ENCODE measurements at regions of chrX and their contacts with region 1.

Region 1: GRCh38 chrX:119791438-119792231 is at the start of gene RPL39:
- DNase-seq: peak; percentile 86
- H3K4me3 Mint-ChIP-seq: peak within 1 kb of the TSS; percentile 90
- H3K27ac Mint-ChIP-seq: peak within 1 kb of the TSS; percentile 97
- H3K4me1 Mint-ChIP-seq: peaks cover 20% of the 10 kb centered on the region
- H3K27me3 Mint-ChIP-seq: no peaks in the 10 kb centered on the region
- total RNA-seq, gene RPL39: 2,669 to 2,681 TPM

Region 2: GRCh38 chrX:119647552-119648420 is 143.8 kb before region 1 on chrX:
- CTCF ChIA-PET with region 1: no interaction called
- POLR2A ChIA-PET with region 1: no interaction called
- intact Hi-C with region 1: loop called (anchors 1 kb)
- DNase-seq: peak; percentile 84
- H3K4me3 Mint-ChIP-seq: peak overlapping the region; percentile 51
- H3K27ac Mint-ChIP-seq: peak overlapping the region; percentile 97
- H3K4me1 Mint-ChIP-seq: peaks cover 33% of the 10 kb centered on the region
- H3K27me3 Mint-ChIP-seq: no peaks in the 10 kb centered on the region

Region 3: DNA sequence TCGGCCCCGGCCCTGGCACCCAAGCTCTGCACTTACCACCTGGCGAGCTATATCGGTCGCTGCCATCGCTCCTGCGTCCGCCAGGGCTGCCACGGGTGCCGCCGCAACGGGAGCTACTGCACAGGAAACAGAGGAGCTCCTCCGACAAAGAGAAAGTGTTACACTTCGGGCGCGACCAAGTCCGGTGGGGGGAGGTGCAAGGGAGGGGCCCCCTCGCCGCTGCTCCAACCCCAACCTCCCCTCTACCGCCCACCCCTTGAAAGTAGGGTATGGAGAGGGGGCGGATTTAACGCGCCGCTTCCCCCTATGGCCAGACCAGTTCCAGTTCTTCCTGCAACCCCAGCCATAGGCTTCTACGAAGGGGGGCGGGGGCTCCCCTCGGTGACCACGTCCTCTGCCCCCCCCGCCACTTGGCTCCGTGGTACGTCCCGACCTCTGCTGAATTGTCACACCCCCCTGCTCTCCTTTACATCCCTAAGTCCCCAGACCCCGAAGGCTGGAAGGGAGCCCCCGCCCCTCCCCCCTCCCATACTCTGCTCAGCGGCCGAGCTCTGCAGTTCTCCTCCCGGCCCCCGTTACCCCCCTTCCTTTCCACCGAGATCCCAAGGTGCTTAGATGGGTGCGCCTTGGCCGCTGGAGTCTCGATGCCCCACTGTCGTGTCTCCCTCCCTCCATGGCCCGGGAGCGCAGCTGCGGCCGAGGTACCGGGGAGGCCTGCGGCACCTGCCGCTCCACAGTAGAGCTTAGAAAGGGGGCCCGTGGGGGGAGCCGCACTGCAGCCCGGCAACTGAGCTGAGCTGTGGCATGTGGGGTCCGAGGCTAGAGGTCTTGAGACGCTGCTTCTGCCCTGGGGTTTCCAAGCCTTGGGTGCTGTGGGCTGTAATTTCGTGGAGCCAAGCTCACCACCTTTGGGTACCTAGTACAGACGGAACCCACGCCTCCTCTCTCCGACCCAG is 98.3 kb before region 1 on chrX and contains the start of gene SEPTIN6:
- CTCF ChIA-PET with region 1: no interaction called
- POLR2A ChIA-PET with region 1: interaction called, 14 read pairs
- intact Hi-C with region 1: loop called (anchors 2 kb)
- DNase-seq: peak; percentile 89
- H3K4me3 Mint-ChIP-seq: peak within 1 kb of the TSS; percentile 88
- H3K27ac Mint-ChIP-seq: peak within 1 kb of the TSS; percentile 99
- H3K4me1 Mint-ChIP-seq: peaks cover 6% of the 10 kb centered on the region
- H3K27me3 Mint-ChIP-seq: no peaks in the 10 kb centered on the region
- total RNA-seq, gene SEPTIN6: 154 to 156 TPM

Region 4: DNA sequence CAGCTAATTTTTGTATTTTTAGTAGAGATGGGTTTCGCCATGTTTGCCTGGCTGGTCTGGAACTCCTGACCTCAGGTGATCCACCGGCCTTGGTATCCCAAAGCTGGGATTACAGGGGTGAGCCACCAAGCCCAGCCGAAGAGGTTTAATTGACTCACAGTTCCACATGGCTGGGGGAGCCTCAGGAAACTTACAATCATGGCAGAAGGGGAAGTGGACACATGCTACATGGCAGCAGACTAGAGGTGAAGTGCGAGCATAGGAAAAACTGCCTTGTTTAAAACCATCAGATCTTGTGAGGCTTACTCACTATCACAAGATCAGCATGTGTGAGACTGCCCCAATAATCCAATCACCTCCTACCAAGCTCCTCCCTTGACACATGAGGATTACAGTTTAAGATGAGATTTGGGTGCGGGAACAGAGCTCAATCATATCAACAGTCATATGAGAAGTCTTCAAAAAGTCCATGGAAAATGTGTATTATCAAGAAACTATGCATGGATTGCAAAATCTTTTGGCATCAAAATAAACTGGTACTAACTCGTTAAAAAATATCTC is 25.6 kb after region 1 on chrX:
- CTCF ChIA-PET with region 1: no interaction called
- POLR2A ChIA-PET with region 1: interaction called, 6 read pairs
- intact Hi-C with region 1: loop called (anchors 1 kb)
- DNase-seq: no peak
- H3K4me3 Mint-ChIP-seq: no peak overlapping the region
- H3K27ac Mint-ChIP-seq: no peak overlapping the region
- H3K4me1 Mint-ChIP-seq: peaks cover 18% of the 10 kb centered on the region
- H3K27me3 Mint-ChIP-seq: no peaks in the 10 kb centered on the region

Region 5: DNA sequence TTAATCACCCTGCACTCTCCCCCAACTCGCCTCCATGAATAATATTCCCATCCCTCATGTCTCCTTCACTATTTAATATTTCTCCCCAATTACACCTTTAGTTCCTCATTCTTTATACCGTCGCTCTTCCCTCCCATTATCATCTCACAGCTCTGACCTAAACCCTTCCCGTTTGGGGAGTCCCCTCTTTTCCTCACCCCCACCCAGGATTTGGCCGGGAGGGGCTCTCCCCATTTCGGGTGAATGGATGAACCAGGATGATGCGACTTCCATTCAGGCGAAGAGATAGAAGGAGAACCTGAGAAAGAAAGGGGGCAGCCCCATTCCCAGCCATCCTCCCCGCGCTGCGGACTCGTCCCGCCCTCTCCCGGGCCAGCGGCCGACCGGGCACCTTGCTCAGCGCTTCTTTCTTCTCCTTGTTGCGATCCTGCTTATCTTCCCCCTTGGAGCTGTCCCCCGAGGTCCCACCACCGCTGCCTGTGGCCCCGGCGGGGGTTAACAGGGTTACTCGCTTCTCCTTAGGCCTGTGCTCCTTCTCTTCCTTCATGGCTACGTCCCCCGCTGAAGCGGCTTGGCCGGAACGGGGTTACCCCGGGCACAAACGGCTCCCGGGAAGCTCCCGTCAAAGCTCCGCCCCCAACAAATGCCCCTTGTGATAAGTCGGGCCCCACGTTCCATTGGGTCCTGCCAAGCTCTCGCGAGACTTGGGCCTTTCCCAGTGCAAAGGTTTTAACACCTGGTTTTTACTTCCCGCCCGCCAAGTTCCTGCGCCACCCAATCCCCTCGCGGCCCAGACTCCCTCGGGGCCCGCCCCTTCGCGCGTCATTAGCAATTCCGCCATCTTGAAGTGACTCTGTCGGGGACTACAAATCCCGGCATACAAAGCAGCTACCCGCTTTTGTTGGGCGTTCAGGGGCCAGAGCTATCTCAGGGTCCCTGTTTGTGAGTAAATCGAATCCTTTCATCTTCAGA is 61.0 kb after region 1 on chrX and contains the start of gene UPF3B:
- CTCF ChIA-PET with region 1: interaction called, 7 read pairs
- POLR2A ChIA-PET with region 1: interaction called, 19 read pairs
- intact Hi-C with region 1: loop called (anchors 1 kb)
- DNase-seq: peak; percentile 96
- H3K4me3 Mint-ChIP-seq: peak within 1 kb of the TSS; percentile 99
- H3K27ac Mint-ChIP-seq: peak within 1 kb of the TSS; percentile 94
- H3K4me1 Mint-ChIP-seq: peaks cover 8% of the 10 kb centered on the region
- H3K27me3 Mint-ChIP-seq: no peaks in the 10 kb centered on the region
- total RNA-seq, gene UPF3B: 14.8 to 15.3 TPM

Region 6: GRCh38 chrX:119880552-119881437 is 89.2 kb after region 1 on chrX:
- CTCF ChIA-PET with region 1: interaction called, 4 read pairs
- POLR2A ChIA-PET with region 1: interaction called, 4 read pairs
- intact Hi-C with region 1: loop called (anchors 1 kb)
- DNase-seq: peak; percentile 34
- H3K4me3 Mint-ChIP-seq: no peak overlapping the region
- H3K27ac Mint-ChIP-seq: peak overlapping the region; percentile 5
- H3K4me1 Mint-ChIP-seq: peaks cover 9% of the 10 kb centered on the region
- H3K27me3 Mint-ChIP-seq: no peaks in the 10 kb centered on the region

Region 7: GRCh38 chrX:119943185-119943988 is 151.8 kb after region 1 on chrX and contains the start of gene NKAP:
- CTCF ChIA-PET with region 1: interaction called, 3 read pairs
- POLR2A ChIA-PET with region 1: interaction called, 6 read pairs
- intact Hi-C with region 1: loop called (anchors 2 kb)
- DNase-seq: peak; percentile 89
- H3K4me3 Mint-ChIP-seq: peak within 1 kb of the TSS; percentile 89
- H3K27ac Mint-ChIP-seq: peak within 1 kb of the TSS; percentile 93
- H3K4me1 Mint-ChIP-seq: peaks cover 15% of the 10 kb centered on the region
- H3K27me3 Mint-ChIP-seq: no peaks in the 10 kb centered on the region
- total RNA-seq, gene NKAP: 10.8 to 11.7 TPM

Measured in activated CD4-positive, alpha-beta memory T cell treated with anti-CD3 and anti-CD28 coated beads for 36 hours (primary cell).